Astrocyte of the cerebellum (primary cell): ENCODE measurements at regions of chr13 and their contacts with region 1.

Region 1: DNA sequence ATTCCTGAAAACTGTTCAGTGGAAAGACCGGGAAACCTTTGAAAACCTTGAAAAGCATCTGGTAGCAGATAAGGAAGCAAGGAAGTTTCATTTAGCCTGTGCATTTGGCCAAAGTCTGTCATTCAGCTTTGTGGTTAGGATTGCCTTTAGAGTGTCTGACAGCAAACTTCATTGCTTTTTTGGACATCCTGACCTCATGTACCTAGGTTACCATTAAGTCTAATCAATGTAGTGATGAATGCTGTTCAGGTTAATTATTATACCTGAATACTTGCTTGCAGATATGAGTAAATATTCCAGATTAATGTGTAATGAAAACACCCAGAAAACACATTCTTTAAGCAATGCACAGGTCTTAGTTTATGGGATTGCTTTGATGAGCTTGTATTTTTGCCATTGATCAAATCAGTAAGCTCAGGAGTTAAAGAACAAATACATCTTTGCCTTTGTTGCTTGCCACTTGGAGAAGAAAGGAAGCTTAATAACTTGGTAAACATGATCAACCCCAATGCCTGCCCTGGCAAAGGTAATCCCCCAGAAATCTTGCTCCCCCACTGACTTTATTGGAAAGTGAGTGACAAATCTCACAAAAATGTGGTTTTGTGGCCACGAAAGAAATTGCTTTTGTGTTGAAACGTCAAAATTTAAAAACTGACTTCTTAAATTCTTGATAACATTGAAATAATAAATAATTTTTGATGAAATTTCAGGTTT is 87.4 kb downstream of the SLC15A1 start:
- DNase-seq: peak; percentile 49
- H3K4me3 ChIP-seq: no peak overlapping the region
- CTCF ChIP-seq: no peak

Region 2: GRCh38 chr13:98581971-98582680 is 83.0 kb before region 1 on chr13:
- in situ Hi-C with region 1: loop called (anchors 5 kb)
- DNase-seq: no peak
- H3K4me3 ChIP-seq: no peak overlapping the region
- CTCF ChIP-seq: no peak

Region 3: DNA sequence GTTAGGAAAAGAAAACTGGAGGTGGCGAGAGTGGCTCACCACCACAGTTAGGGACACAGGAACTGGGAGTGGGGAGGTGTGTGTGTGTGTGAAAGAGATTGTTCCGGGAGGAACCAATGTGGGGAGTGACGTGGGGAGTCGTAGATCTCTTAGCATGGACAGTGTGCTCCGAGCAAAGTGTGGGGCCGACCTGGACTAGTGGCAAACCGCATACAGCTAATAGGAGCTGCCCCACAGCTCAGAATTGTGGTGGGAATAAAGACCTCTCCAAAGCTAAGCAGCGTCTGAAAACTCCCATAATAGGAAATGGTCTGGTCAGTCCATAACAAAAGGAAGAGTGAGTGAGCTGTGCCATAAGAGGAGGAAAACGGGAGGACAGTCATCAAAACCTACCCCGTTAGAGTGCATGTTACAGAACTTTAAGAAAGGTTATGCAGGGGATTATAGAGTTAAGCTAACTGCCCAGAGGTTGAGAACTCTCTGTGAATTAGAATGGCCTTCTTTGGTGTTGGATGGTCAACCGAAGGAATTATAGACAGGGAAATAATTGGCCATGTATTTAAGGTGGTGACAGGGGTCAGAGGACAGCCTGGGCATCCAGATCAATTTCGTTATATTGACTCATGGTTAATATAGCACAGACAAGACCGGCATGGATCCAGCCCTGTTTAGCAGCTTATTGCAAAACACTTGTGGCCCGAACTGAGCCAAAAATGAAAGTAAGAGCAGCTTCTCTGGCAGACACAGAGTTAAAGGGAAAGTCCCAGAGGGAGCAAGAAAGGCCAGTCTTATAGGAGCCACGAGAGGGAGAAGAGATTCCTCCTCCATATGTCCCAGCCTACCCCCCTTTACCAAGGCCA is 96.3 kb after region 1 on chr13:
- in situ Hi-C with region 1: no loop called
- DNase-seq: peak; percentile 28
- H3K4me3 ChIP-seq: no peak overlapping the region
- CTCF ChIP-seq: no peak